ENCODE measurements at regions of chr12 and their contacts with region 1.

Region 1: GRCh38 chr12:53321074-53321814 is at the start of gene AAAS:
- DNase-seq: peak; percentile 94
- H3K4me3 Mint-ChIP-seq: peak within 1 kb of the TSS; percentile 90
- H3K27ac Mint-ChIP-seq: peak within 1 kb of the TSS; percentile 93
- H3K4me1 Mint-ChIP-seq: peaks cover 23% of the 10 kb centered on the region
- H3K27me3 Mint-ChIP-seq: no peaks in the 10 kb centered on the region
- CTCF ChIP-seq: peak; percentile 90
- total RNA-seq, gene AAAS: 52.7 and 60.5 TPM in 2 replicates

Region 2: DNA sequence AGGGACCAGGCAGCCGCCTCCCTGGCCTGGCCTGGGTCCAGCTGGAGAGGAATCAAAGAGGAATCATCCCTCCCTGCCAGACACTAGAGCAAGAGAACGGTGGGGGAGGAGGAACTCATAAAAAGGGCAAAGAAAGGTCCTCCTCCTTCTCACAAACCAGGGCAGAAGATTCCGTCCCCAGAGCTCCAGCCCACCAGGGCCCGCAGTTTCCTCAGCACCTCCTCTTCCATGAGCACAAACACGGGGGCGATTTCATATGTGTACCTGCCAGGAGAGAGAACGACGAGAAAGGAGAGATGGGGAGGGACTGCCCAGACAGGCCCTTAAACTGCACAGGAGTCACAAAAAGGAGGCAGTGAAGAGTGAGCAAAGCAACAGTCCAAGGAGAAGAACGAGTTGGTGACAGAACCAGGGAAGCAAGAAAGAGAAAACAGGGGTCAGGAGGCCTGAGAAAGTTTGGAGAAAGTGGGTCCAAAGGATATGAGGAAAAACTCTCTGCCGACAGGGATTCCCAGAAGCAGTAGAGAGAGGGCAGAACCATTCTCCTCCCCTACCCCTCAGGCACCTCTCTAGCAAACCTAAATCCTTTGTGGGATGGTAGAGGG is 149.4 kb before region 1 on chr12:
- CTCF ChIA-PET with region 1: no interaction called
- POLR2A ChIA-PET with region 1: no interaction called
- intact Hi-C with region 1: no loop called
- DNase-seq: no peak
- H3K4me3 Mint-ChIP-seq: no peak overlapping the region
- H3K27ac Mint-ChIP-seq: peak overlapping the region; percentile 56
- H3K4me1 Mint-ChIP-seq: peaks cover 18% of the 10 kb centered on the region
- H3K27me3 Mint-ChIP-seq: no peaks in the 10 kb centered on the region
- CTCF ChIP-seq: no peak

Region 3: DNA sequence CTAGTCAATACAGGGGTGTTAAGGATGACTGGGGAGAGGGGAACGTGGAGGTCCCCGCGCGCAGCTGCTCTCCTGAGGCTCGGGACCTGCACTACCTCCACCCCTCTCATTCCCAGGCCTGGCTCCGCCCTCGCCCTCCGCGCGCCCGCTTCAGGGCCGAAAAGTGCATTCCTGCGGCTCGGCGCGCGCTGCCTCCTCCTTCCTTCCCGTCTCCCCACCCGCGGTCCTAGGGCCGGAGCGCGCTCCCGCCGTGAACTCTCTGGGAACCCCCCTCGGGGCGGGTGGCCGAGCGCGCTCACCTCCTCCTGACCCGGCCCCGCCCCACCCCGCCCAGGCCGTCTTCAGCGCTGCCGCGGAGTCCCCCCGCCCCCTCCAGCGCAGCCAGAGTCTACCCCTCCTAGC is 100.4 kb before region 1 on chr12:
- CTCF ChIA-PET with region 1: interaction called, 3 read pairs
- POLR2A ChIA-PET with region 1: interaction called, 11 read pairs
- intact Hi-C with region 1: no loop called
- DNase-seq: peak; percentile 93
- H3K4me3 Mint-ChIP-seq: peak overlapping the region; percentile 83
- H3K27ac Mint-ChIP-seq: peak overlapping the region; percentile 80
- H3K4me1 Mint-ChIP-seq: peaks cover 69% of the 10 kb centered on the region
- H3K27me3 Mint-ChIP-seq: no peaks in the 10 kb centered on the region
- CTCF ChIP-seq: no peak

Region 4: DNA sequence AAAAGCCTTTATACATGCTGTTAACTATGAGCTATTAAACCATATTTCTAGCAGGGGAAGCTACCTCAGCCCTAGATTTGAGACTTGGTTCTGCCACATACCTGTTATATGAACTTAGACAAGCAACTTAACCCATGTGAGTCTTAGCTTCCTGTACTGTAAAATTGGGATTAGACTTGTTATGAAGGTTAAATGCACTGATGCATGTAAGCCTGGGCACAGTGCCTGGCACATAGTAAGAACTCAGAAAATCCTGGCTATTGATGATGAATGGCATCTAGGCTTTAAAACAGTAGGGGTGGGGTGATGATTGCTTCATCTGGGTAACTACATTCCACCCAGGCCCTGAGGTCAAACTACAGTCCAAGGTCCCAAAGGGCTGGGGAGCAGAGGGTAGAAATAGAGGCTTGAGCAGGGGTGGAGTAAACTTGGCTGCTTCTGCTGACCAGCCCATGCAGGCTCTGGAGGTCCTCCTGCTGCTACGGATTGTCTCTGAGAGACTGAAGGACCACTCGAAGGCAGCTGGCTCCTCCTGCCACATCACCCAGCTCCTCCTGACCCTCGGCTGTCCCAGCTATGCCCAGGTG is 41.9 kb before region 1 on chr12:
- CTCF ChIA-PET with region 1: no interaction called
- POLR2A ChIA-PET with region 1: no interaction called
- intact Hi-C with region 1: no loop called
- DNase-seq: no peak
- H3K4me3 Mint-ChIP-seq: no peak overlapping the region
- H3K27ac Mint-ChIP-seq: no peak overlapping the region
- H3K4me1 Mint-ChIP-seq: no peaks in the 10 kb centered on the region
- H3K27me3 Mint-ChIP-seq: no peaks in the 10 kb centered on the region
- CTCF ChIP-seq: no peak

Region 5: DNA sequence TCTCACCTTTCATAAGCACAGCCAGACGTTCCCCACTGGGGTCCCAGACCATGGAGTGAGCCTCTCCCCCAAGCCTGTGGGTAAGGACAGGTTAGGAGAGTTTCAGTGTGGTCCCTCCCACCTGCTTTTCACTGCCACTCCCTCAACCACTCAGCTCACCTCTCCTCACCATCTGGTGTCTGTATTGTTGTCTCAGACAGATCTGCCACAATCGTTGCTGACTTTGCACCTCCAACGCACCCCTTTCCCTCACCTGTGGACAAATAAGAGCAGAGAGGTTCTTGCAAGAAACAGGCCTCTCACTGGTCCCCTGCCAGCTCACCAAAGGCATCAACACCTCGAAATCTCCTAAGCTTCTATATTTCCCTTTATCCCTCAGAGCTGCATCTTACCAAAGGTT is 13.0 kb before region 1 on chr12:
- CTCF ChIA-PET with region 1: interaction called, 38 read pairs
- POLR2A ChIA-PET with region 1: interaction called, 79 read pairs
- intact Hi-C with region 1: no loop called
- DNase-seq: no peak
- H3K4me3 Mint-ChIP-seq: no peak overlapping the region
- H3K27ac Mint-ChIP-seq: peak overlapping the region; percentile 86
- H3K4me1 Mint-ChIP-seq: no peaks in the 10 kb centered on the region
- H3K27me3 Mint-ChIP-seq: no peaks in the 10 kb centered on the region
- CTCF ChIP-seq: no peak

Region 6: GRCh38 chr12:53379389-53380103 is 58.3 kb after region 1 on chr12:
- CTCF ChIA-PET with region 1: interaction called, 33 read pairs
- POLR2A ChIA-PET with region 1: interaction called, 64 read pairs
- intact Hi-C with region 1: loop called (anchors 2 kb)
- DNase-seq: peak; percentile 100
- H3K4me3 Mint-ChIP-seq: no peak overlapping the region
- H3K27ac Mint-ChIP-seq: no peak overlapping the region
- H3K4me1 Mint-ChIP-seq: peaks cover 27% of the 10 kb centered on the region
- H3K27me3 Mint-ChIP-seq: no peaks in the 10 kb centered on the region
- CTCF ChIP-seq: no peak

Region 7: DNA sequence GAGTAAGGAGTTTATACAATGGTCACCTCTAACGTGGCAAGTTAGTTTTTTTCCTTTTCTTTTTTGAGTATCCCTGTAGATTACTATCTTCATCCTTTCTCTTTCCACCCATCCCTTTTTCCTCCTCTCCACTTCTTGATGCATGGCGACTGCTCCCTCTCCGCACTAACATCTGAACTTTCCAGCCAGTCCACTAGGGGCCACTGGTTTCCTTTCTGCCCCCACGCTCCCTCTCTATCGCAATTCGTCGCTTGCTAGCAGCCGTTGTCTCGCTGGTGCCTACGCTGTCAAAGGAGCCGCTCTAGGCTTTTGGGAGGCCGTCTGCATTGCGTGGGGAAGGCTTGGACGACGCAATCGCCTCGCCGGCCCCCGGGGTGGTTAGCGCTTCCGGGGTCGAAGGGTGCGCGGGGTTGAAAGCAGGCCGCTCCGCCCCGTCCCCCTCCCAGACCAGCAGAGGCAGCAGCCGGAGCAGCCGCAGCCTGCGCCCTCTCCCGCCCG is 130.5 kb after region 1 on chr12 and contains the start of gene PCBP2:
- CTCF ChIA-PET with region 1: interaction called, 5 read pairs
- POLR2A ChIA-PET with region 1: interaction called, 17 read pairs
- intact Hi-C with region 1: loop called (anchors 1 kb)
- DNase-seq: peak; percentile 99
- H3K4me3 Mint-ChIP-seq: peak within 1 kb of the TSS; percentile 92
- H3K27ac Mint-ChIP-seq: peak within 1 kb of the TSS; percentile 100
- H3K4me1 Mint-ChIP-seq: peaks cover 30% of the 10 kb centered on the region
- H3K27me3 Mint-ChIP-seq: no peaks in the 10 kb centered on the region
- CTCF ChIP-seq: peak; percentile 56
- total RNA-seq, gene PCBP2: 994 and 1,037 TPM in 2 replicates

Region 8: DNA sequence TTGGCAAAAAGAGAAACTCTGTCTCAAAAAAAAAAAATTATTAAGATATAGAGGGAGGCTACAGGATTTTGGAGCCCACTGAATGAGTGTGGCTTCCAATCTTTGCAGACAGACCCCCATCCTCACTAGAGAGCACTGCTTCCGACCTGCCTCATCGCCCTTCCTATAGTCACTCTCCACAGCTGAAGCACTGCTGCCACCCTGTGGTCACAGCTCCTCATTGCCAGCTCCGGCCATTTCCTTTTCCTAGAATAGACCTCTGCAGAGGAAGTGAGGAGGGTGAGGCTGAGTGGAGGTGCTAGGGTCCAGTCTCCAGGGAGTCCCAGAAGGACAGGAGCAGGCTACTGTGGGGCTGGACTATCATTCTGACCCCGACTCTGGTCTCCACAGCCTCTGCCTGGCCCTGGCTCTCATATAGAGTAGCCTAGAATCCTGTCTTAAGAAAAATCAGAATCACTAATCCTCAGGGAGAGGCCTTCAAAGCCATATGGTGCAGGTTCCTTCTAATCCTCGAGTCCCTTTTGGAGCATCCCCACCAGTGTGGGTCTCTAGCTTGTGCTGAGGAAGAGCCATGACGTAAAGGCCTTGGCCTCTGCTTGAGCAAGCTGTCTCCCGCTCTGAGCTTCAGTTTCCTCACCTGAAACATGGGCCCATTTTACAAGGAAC is 187.4 kb after region 1 on chr12:
- CTCF ChIA-PET with region 1: interaction called, 17 read pairs
- POLR2A ChIA-PET with region 1: interaction called, 6 read pairs
- intact Hi-C with region 1: loop called (anchors 1 kb)
- DNase-seq: peak; percentile 85
- H3K4me3 Mint-ChIP-seq: no peak overlapping the region
- H3K27ac Mint-ChIP-seq: no peak overlapping the region
- H3K4me1 Mint-ChIP-seq: peaks cover 5% of the 10 kb centered on the region
- H3K27me3 Mint-ChIP-seq: no peaks in the 10 kb centered on the region
- CTCF ChIP-seq: peak; percentile 88

Measured in MCF 10A (cell line).